ENCODE measurements at regions of chr22 and their contacts with region 1.

Region 1: GRCh38 chr22:42202669-42203068 is 67.8 kb downstream of the TCF20 start:
- DNase-seq: peak; percentile 74
- H3K4me3 Mint-ChIP-seq: peak overlapping the region; percentile 63
- H3K27ac Mint-ChIP-seq: peak overlapping the region; percentile 95
- H3K4me1 Mint-ChIP-seq: peaks cover 53% of the 10 kb centered on the region
- H3K27me3 Mint-ChIP-seq: no peaks in the 10 kb centered on the region

Region 2: DNA sequence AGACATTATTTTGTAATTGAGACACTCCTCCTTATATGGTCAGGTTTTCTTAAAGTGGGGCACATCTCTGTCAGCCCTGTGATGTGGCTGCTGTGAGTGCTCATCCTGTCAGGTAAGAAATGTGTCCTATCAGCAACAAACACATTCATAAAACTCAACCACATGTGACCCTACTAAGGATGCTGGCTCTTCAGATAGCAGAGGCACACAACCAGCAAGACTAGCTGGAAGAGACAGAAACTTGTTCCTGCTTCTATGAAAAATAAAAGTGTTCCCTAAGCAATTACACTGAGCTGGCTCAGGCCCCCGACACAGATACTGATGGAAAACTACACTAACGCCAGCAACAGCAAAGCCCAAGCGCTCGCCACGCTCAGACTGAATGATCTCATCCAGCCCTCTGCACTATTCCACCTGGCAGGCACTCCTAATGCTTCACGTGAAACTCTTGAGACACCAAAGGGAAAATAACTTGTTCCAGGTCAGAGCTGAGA is 22.3 kb before region 1 on chr22:
- CTCF ChIA-PET with region 1: interaction called, 9 read pairs
- POLR2A ChIA-PET with region 1: interaction called, 36 read pairs
- DNase-seq: peak; percentile 67
- H3K4me3 Mint-ChIP-seq: peak overlapping the region; percentile 36
- H3K27ac Mint-ChIP-seq: peak overlapping the region; percentile 90
- H3K4me1 Mint-ChIP-seq: peaks cover 86% of the 10 kb centered on the region
- H3K27me3 Mint-ChIP-seq: no peaks in the 10 kb centered on the region

Region 3: GRCh38 chr22:42217019-42217751 is 14.5 kb after region 1 on chr22:
- CTCF ChIA-PET with region 1: interaction called, 6 read pairs
- POLR2A ChIA-PET with region 1: interaction called, 18 read pairs
- DNase-seq: peak; percentile 29
- H3K4me3 Mint-ChIP-seq: peak overlapping the region; percentile 12
- H3K27ac Mint-ChIP-seq: peak overlapping the region; percentile 86
- H3K4me1 Mint-ChIP-seq: peaks cover 44% of the 10 kb centered on the region
- H3K27me3 Mint-ChIP-seq: no peaks in the 10 kb centered on the region